ENCODE measurements at regions of chr13 and their contacts with region 1.

Region 1: GRCh38 chr13:52128714-52129700 is at the start of gene NEK5:
- DNase-seq: peak; percentile 69
- H3K4me3 ChIP-seq: peak within 1 kb of the TSS; percentile 54 to 69 (median 68)
- H3K27ac ChIP-seq: no peak within 1 kb of the TSS
- H3K4me1 ChIP-seq: peaks cover 8% of the 10 kb centered on the region
- H3K27me3 ChIP-seq: no peaks in the 10 kb centered on the region
- CTCF ChIP-seq: peak; percentile 66 to 79
- POLR2A ChIP-seq: no peak
- total RNA-seq, gene NEK5: 0.16 and 0.18 TPM in 2 replicates

Region 2: DNA sequence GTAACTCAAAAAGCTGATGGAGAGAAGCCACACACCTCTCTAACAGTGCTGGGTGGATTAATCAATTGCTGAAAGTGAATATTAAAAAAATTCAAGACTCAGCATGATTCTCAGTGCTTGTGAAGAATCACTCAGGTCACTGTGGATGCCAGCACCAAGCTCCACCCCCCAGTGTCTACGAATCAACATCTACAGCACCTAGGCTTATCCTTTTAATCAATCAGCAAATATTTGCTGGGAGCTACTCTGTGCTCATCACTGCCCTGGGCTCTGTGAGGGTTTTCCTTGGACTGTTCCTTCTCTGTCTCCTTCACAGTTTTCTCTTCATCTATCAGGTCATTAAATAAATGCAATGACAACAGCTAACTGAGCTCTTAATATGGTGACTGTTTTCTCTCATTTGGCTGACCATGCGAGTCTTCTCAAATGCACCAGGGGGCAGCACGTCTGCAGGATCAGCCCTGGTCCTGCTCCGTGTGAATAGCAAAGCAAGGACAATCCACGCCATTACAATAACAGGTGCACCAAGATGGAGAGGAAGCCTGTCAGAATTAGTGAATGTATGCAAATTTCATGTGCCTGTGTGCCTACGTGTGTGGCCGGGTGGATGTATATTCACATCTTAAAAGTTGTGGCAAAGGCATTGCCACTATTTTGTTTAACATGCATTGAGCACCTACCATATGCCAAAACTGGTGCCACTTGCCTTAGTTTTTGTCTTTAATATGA is 1003.3 kb before region 1 on chr13:
- CTCF ChIA-PET with region 1: interaction called, 26 read pairs
- POLR2A ChIA-PET with region 1: no interaction called
- dilution Hi-C with region 1: no loop called
- intact Hi-C with region 1: no loop called
- DNase-seq: peak; percentile 60
- H3K4me3 ChIP-seq: no peak overlapping the region
- H3K27ac ChIP-seq: no peak overlapping the region
- H3K4me1 ChIP-seq: no peaks in the 10 kb centered on the region
- H3K27me3 ChIP-seq: peaks cover 4 to 15% of the 10 kb centered on the region in 2 experiments
- CTCF ChIP-seq: peak; percentile 82 to 88
- POLR2A ChIP-seq: no peak

Region 3: DNA sequence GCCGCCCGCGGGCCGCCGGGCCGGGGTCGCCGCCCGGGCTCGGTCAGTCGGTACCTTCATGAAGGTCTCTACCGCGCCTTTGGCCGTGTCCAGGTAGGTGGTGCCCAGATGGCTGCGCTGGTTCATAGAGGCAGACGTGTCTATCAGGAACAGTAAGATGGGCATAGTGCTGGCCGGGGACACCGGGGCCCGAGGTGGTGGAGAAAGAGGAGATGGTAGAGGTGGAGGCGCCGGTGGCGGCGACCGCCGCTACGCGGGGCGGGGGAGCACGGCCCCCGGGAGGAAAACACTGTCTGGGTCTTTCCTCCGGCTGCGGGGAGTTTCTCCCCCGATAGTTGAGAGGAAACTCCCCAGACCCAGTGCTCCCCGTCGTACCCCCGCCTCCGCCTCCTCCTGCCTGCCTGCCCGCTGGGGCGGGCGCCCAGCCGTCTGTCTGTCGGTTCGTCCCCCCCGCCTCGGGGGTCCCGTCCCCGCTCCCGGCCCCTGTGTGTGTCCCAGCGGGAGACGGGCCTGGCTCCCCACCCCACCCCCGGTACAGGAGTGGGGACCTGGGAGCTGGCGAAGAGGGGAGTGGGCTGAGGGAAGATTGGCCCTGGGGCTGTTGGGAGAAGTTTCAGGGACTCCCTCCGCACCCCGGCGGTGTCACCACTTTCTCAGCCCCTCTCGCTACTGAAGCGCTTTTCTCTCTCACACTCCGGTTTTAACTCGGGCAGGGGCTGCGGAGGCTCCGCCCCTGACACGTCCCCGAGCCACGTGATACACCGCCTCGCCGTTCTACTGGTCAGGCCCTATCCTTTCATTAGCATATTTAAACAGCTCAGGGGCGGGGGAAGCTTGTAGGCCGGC is 676.4 kb before region 1 on chr13 and contains the start of gene INTS6:
- CTCF ChIA-PET with region 1: interaction called, 3 read pairs
- POLR2A ChIA-PET with region 1: no interaction called
- dilution Hi-C with region 1: no loop called
- intact Hi-C with region 1: loop called (anchors 5 kb)
- DNase-seq: peak; percentile 99
- H3K4me3 ChIP-seq: peak within 1 kb of the TSS; percentile 79 to 99 (median 91)
- H3K27ac ChIP-seq: peak within 1 kb of the TSS; percentile 93
- H3K4me1 ChIP-seq: peaks cover 20% of the 10 kb centered on the region
- H3K27me3 ChIP-seq: no peaks in the 10 kb centered on the region
- CTCF ChIP-seq: no peak
- POLR2A ChIP-seq: peak; percentile 99
- total RNA-seq, gene INTS6: 38.2 and 45.4 TPM in 2 replicates

Region 4: DNA sequence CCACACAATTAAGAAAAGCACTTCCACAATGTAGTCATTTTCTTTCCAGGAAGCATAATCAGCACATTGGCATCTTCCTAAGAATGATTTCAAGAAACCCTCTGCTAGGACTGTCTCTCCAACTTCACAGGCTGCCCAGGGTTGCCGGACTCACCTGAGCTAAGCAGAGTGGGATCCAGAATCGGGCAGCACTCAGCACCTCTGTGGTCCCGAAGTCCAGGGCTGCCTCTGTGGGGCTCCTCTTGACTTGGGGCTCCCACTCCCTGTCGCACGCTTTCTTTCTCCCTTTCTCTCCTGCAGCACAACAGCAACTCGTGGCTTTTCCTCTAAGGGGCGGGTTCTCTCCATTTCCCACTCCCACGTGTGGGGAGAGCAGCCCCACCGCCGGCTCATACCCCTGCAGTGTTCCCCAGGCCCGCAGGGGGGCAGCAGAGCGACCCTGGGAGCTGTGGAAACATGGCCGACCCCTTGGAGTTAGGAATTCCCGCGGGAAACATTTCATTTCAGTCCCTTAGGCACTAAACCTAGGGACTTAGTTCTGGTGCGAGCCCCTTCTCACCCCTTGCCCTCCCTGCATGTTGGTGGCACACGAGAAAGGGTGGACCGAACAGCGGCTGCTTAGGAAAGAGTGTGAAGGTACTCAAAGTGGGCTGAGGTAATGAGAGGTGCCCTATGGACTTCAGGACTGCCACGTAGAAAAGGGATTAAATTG is 284.0 kb before region 1 on chr13 and contains the start of gene TMEM272:
- CTCF ChIA-PET with region 1: interaction called, 29 read pairs
- POLR2A ChIA-PET with region 1: no interaction called
- dilution Hi-C with region 1: no loop called
- intact Hi-C with region 1: loop called (anchors 1 kb)
- DNase-seq: peak; percentile 60
- H3K4me3 ChIP-seq: no peak within 1 kb of the TSS
- H3K27ac ChIP-seq: no peak within 1 kb of the TSS
- H3K4me1 ChIP-seq: peaks cover 9% of the 10 kb centered on the region
- H3K27me3 ChIP-seq: peaks cover 6 to 11% of the 10 kb centered on the region in 2 experiments
- CTCF ChIP-seq: peak; percentile 93 to 97
- POLR2A ChIP-seq: no peak
- total RNA-seq, gene TMEM272: not detected in 2 replicates

Region 5: GRCh38 chr13:52001120-52001731 is 127.8 kb before region 1 on chr13:
- CTCF ChIA-PET with region 1: interaction called, 45 read pairs
- POLR2A ChIA-PET with region 1: no interaction called
- dilution Hi-C with region 1: no loop called
- intact Hi-C with region 1: loop called (anchors 1 kb)
- DNase-seq: peak; percentile 38
- H3K4me3 ChIP-seq: no peak overlapping the region
- H3K27ac ChIP-seq: no peak overlapping the region
- H3K4me1 ChIP-seq: no peaks in the 10 kb centered on the region
- H3K27me3 ChIP-seq: peaks cover 10 to 11% of the 10 kb centered on the region in 2 experiments
- CTCF ChIP-seq: peak; percentile 42 to 61
- POLR2A ChIP-seq: no peak

Region 6: GRCh38 chr13:52118595-52118994 is 10.4 kb before region 1 on chr13:
- CTCF ChIA-PET with region 1: interaction called, 10 read pairs
- POLR2A ChIA-PET with region 1: no interaction called
- dilution Hi-C with region 1: no loop called
- intact Hi-C with region 1: no loop called
- DNase-seq: no peak
- H3K4me3 ChIP-seq: no peak overlapping the region
- H3K27ac ChIP-seq: no peak overlapping the region
- H3K4me1 ChIP-seq: no peaks in the 10 kb centered on the region
- H3K27me3 ChIP-seq: peaks cover 13 to 17% of the 10 kb centered on the region in 2 experiments
- CTCF ChIP-seq: no peak
- POLR2A ChIP-seq: no peak

Region 7: DNA sequence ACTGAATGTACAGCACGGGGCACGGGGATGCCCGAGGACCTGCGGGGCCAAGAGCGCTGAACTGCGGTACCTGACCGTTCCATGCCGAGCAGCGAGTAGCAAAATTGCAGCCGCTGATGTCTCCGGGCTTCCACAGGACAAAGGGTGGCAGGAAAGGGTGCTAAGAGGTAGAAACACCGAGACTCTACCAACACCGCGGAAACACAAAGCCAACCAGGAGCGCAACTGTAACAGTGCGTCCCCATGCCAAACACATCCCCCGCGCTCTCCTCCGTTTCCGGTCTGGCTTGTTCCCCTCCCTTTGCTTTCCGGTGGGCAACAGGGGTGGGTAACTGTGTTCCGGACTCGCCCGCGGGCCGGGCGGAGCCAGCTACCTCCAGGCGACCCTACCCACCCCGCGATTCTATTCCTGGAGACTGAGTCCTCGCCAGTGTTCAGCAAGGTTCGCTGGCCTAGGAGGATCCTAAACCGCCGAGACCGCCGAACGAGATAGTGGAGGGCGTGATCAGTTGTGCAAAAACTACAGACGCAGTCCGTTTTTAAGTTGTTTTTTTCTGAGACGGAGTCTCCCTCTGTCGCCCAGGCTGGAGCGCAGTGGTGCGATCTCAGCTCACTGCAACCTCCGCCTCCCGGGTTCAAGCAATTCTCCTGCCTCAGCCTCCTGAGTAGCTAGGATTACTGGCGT is 65.3 kb after region 1 on chr13:
- CTCF ChIA-PET with region 1: interaction called, 11 read pairs
- POLR2A ChIA-PET with region 1: no interaction called
- dilution Hi-C with region 1: no loop called
- intact Hi-C with region 1: loop called (anchors 1 kb)
- DNase-seq: peak; percentile 68
- H3K4me3 ChIP-seq: peak overlapping the region; percentile 37 to 88 (median 73)
- H3K27ac ChIP-seq: peak overlapping the region; percentile 43
- H3K4me1 ChIP-seq: peaks cover 9% of the 10 kb centered on the region
- H3K27me3 ChIP-seq: no peaks in the 10 kb centered on the region
- CTCF ChIP-seq: no peak
- POLR2A ChIP-seq: peak; percentile 91